ENCODE measurements at regions of chr5 and their contacts with region 1.

Region 1: DNA sequence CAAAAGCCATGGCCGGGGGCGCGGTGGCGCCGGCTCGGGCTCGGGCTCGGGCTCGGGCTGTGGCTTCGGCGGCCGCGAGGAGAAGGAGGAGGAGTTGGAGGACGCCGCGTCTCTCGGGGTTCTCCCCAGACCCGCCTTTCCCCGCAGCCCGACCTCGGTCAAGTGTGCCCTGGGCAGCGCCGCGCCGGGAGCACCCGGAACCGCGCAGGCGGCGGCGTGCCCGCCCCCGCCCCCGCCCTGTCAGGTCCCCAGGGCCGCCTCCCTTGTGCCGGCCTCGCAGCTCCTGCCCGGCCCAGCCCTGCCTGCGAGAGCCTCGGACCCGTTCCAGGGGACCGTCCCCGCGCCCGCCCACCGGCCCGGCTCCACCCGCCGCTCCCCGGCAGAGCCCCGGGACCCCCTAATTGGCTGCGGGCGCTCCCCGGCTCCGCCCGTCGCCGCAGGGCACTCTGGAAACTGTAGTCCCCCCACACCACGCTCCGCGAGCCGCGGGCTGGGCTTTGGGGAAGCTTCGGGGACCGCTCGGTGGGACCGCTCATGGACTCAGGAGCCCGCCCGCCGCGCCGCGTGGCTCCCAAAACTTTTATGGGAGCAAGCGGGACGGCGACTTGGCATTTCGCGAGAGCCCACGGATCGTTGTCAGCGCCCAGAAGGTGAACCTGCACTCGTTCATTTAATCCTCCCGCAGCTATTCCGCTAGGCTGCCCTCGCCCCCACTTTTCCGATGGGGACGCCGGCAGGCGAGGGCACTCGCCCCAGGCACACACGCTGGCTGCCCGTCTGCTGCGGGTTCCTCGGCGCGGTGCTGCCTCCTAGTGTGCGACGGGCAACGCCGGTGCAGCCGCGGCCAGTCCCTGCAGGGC is at the start of gene STK10:
- DNase-seq: peak; percentile 93
- ATAC-seq: peak; percentile 76
- H3K4me3 Mint-ChIP-seq: peak within 1 kb of the TSS; percentile 92
- H3K27ac Mint-ChIP-seq: peak within 1 kb of the TSS; percentile 96
- H3K4me1 Mint-ChIP-seq: peaks cover 18% of the 10 kb centered on the region
- H3K27me3 Mint-ChIP-seq: no peaks in the 10 kb centered on the region
- CTCF ChIP-seq: peak; percentile 90
- total RNA-seq, gene STK10: 142 to 143 TPM

Region 2: GRCh38 chr5:172065501-172065990 is 122.7 kb before region 1 on chr5:
- CTCF ChIA-PET with region 1: interaction called, 21 read pairs
- POLR2A ChIA-PET with region 1: interaction called, 4 read pairs
- intact Hi-C with region 1: loop called (anchors 2 kb)
- DNase-seq: no peak
- ATAC-seq: no peak
- H3K4me3 Mint-ChIP-seq: no peak overlapping the region
- H3K27ac Mint-ChIP-seq: peak overlapping the region; percentile 85
- H3K4me1 Mint-ChIP-seq: peaks cover 55% of the 10 kb centered on the region
- H3K27me3 Mint-ChIP-seq: no peaks in the 10 kb centered on the region
- CTCF ChIP-seq: no peak

Region 3: GRCh38 chr5:172097356-172097755 is 90.9 kb before region 1 on chr5:
- CTCF ChIA-PET with region 1: interaction called, 129 read pairs
- POLR2A ChIA-PET with region 1: interaction called, 3 read pairs
- intact Hi-C with region 1: no loop called
- DNase-seq: no peak
- ATAC-seq: no peak
- H3K4me3 Mint-ChIP-seq: no peak overlapping the region
- H3K27ac Mint-ChIP-seq: no peak overlapping the region
- H3K4me1 Mint-ChIP-seq: peaks cover 15% of the 10 kb centered on the region
- H3K27me3 Mint-ChIP-seq: no peaks in the 10 kb centered on the region
- CTCF ChIP-seq: no peak

Region 4: GRCh38 chr5:172123269-172123692 is 65.0 kb before region 1 on chr5:
- CTCF ChIA-PET with region 1: interaction called, 12 read pairs
- POLR2A ChIA-PET with region 1: no interaction called
- intact Hi-C with region 1: no loop called
- DNase-seq: no peak
- ATAC-seq: no peak
- H3K4me3 Mint-ChIP-seq: no peak overlapping the region
- H3K27ac Mint-ChIP-seq: peak overlapping the region; percentile 52
- H3K4me1 Mint-ChIP-seq: peaks cover 35% of the 10 kb centered on the region
- H3K27me3 Mint-ChIP-seq: no peaks in the 10 kb centered on the region
- CTCF ChIP-seq: no peak

Region 5: GRCh38 chr5:172199446-172199845 is 11.2 kb after region 1 on chr5:
- CTCF ChIA-PET with region 1: interaction called, 22 read pairs
- POLR2A ChIA-PET with region 1: interaction called, 5 read pairs
- intact Hi-C with region 1: no loop called
- DNase-seq: no peak
- ATAC-seq: no peak
- H3K4me3 Mint-ChIP-seq: no peak overlapping the region
- H3K27ac Mint-ChIP-seq: no peak overlapping the region
- H3K4me1 Mint-ChIP-seq: no peaks in the 10 kb centered on the region
- H3K27me3 Mint-ChIP-seq: peaks cover 9% of the 10 kb centered on the region
- CTCF ChIP-seq: no peak

Region 6: DNA sequence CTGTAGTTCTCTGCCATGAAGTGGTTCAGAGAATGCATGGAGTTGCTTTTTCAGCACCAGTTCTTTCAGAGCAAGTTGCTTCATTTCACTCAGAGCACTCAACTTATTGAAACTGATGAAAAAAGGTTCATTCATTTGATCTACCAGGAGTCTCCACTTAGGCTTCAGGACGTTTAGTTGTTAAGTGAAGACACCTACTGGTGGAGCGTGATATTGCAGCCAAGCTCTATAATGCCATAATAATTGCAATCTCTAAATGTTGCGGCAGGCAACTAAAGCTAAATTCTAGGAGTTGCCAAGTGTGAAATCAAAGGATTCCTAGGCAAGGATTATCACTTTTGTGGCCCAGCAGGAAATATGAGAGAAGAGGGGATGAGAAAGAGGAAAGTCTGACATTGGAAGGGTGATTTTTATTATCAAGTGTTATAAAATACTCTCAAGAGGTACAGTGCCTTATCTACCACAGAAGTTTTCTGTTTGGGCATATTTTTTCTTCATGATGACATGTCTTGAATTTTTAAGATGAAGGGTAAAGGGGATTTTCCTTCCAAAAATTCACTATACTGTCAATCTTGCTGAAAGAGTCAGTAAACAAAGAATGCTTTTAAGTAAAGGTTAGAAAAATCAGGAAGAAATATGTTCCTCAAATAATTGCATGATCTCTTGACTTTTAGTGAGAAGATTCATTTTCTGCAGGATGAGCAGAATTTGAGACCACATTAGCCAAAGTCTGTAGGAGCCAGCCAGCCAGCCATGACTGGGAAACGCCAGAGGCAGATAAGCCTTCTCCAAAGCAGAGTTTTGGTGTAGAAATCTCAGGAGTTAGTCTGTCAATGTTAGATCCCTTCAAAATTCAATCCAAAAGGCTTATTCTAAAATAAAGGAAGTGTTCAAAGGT is 182.6 kb after region 1 on chr5:
- CTCF ChIA-PET with region 1: no interaction called
- POLR2A ChIA-PET with region 1: no interaction called
- intact Hi-C with region 1: no loop called
- DNase-seq: peak; percentile 77
- ATAC-seq: peak; percentile 55
- H3K4me3 Mint-ChIP-seq: no peak overlapping the region
- H3K27ac Mint-ChIP-seq: no peak overlapping the region
- H3K4me1 Mint-ChIP-seq: no peaks in the 10 kb centered on the region
- H3K27me3 Mint-ChIP-seq: peaks cover 2% of the 10 kb centered on the region
- CTCF ChIP-seq: peak; percentile 81

Region 7: GRCh38 chr5:172714491-172715421 is 526.5 kb after region 1 on chr5:
- CTCF ChIA-PET with region 1: no interaction called
- POLR2A ChIA-PET with region 1: no interaction called
- intact Hi-C with region 1: no loop called
- DNase-seq: peak; percentile 83
- ATAC-seq: peak; percentile 88
- H3K4me3 Mint-ChIP-seq: no peak overlapping the region
- H3K27ac Mint-ChIP-seq: no peak overlapping the region
- H3K4me1 Mint-ChIP-seq: peaks cover 4% of the 10 kb centered on the region
- H3K27me3 Mint-ChIP-seq: no peaks in the 10 kb centered on the region
- CTCF ChIP-seq: peak; percentile 90

Measured in activated CD8-positive, alpha-beta T cell treated with anti-CD3 and anti-CD28 coated beads for 36 hours (primary cell).